Gastrocnemius medialis (tissue), 4 donors: ENCODE measurements at regions of chr2 and their contacts with region 1.

Region 1: GRCh38 chr2:222568865-222569264 is 87.0 kb downstream of the FARSB start:
- DNase-seq: peak; percentile 79 to 83
- ATAC-seq: peak; percentile 95 to 96
- H3K4me3 ChIP-seq: no peak overlapping the region
- H3K27ac ChIP-seq: peak overlapping the region; percentile 64 to 80 (median 72)
- H3K4me1 ChIP-seq: peaks cover 32 to 37% of the 10 kb centered on the region in 2 donors
- H3K27me3 ChIP-seq: no peaks in the 10 kb centered on the region
- CTCF ChIP-seq: no peak
- POLR2A ChIP-seq: no peak

Region 2: DNA sequence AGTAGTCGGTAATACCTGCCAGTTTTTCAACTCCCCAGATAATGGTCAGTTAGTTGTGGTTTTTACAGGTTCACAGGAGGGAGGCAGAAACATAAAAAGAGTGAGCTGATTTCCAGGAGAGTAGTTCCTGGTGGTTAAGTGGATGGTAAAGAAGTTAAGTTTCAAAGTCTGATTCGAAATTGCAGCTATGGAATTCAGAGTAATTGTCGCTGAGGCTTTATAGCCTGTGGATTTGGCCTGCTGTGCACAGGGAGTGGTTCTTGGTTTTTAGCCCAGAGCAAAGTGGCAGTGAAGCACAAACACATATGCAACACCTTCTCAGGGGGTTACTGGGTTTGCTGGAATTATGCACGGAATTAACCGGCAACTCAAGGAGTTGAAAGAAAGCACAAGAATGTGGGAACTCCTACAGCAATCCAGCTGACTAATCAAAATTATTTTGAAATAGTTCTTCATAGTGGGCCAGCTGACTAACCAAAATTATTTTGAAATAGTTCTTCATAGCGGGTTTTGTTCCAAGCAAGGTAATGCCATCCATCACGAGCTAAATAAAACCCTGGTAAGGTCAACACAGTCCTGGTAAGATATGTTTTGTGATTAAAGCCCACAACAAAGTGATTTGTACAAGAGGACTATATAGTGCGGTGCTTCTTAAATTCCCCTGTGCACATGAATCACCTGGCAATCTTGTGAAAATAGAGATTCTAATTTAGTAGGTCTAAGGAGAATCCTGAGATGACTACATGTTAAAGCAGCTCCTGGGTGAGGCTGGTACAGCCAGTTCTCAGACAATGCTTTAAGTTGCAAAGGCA is 50.1 kb before region 1 on chr2:
- in situ Hi-C with region 1: no loop called
- intact Hi-C with region 1: loop called (anchors 5 kb)
- DNase-seq: peak; percentile 40 to 49
- ATAC-seq: peak; percentile 90 to 93
- H3K4me3 ChIP-seq: peak overlapping the region in 1 of 4 donors; percentile 8
- H3K27ac ChIP-seq: peak overlapping the region; percentile 43 to 73 (median 60)
- H3K4me1 ChIP-seq: peaks cover 10 to 14% of the 10 kb centered on the region in 2 donors
- H3K27me3 ChIP-seq: no peaks in the 10 kb centered on the region
- CTCF ChIP-seq: no peak
- POLR2A ChIP-seq: no peak